H1 (cell line): ENCODE measurements at regions of chr9 and their contacts with region 1.

Region 1: GRCh38 chr9:124297553-124297905 is 39.8 kb downstream of the NEK6 start:
- DNase-seq: peak; percentile 62
- H3K4me3 ChIP-seq: no peak overlapping the region
- H3K27ac ChIP-seq: 0 out of 2 replicates have a peak overlapping the region, but pooled peaks have one; percentile 17
- H3K4me1 ChIP-seq: peaks cover 0 to 24% (median 12%) of the 10 kb centered on the region in 4 experiments; a peak in 5 of 7 replicates
- H3K27me3 ChIP-seq: no peaks in the 10 kb centered on the region
- CTCF ChIP-seq: no peak
- EP300 ChIP-seq: no peak
- POLR2A ChIP-seq: no peak
- RAD21 ChIP-seq: no peak

Region 2: DNA sequence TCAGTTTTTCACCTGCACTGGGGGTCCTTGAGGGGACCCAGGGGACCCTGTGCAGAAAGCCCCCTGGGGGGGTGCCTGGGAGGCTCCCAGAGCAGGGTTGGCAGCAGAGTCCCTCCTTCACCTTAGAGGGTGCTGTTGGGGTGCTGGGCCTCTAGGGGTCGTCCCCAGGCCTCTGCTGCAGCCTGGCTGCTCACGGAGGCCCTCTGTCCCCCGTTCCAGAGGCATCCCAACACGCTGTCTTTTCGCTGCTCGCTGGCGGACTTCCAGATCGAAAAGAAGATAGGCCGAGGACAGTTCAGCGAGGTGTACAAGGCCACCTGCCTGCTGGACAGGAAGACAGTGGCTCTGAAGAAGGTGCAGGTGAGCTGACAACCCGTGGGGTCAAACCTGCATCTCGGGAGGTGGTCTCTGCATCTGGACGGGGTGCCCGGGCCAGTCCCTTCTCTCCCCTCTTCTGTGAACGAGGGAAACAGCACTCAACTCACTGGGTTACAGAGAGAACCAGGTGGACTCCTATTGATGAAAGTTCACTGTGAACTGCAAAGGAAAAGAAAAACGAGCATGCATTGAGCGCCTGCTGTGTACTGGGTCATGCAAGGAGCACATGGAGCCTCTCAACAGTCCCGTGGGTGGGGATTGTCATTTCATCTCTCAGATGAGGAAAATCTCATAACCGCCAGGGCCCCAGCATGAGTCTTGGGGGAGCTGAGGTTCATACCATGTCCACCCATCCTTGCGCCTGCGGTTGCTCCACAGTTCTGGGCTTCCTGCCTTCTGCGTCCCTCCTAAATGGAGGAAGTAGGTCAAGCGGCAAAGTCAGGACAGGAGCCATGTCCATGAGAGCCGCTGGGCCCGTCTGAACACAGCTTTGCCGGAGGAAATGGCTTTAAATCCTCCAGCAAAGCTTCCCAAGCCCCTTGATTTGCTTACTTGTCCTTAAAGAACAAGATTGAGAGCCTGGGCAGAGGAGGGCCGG is 15.0 kb after region 1 on chr9:
- CTCF ChIA-PET with region 1: interaction called, 23 read pairs
- POLR2A ChIA-PET with region 1: interaction called, 3 read pairs
- DNase-seq: no peak
- H3K4me3 ChIP-seq: no peak overlapping the region
- H3K27ac ChIP-seq: no peak overlapping the region
- H3K4me1 ChIP-seq: peaks cover 0 to 9% (median 3%) of the 10 kb centered on the region in 4 experiments; a peak in 3 of 7 replicates
- H3K27me3 ChIP-seq: no peaks in the 10 kb centered on the region
- CTCF ChIP-seq: peak; percentile 67 to 82 (median 67)
- EP300 ChIP-seq: no peak
- POLR2A ChIP-seq: no peak
- RAD21 ChIP-seq: peak; percentile 42 to 64

Region 3: GRCh38 chr9:124320062-124320973 is 22.8 kb after region 1 on chr9:
- CTCF ChIA-PET with region 1: interaction called, 10 read pairs
- POLR2A ChIA-PET with region 1: no interaction called
- DNase-seq: peak; percentile 47 to 93
- H3K4me3 ChIP-seq: no peak overlapping the region
- H3K27ac ChIP-seq: no peak overlapping the region
- H3K4me1 ChIP-seq: peaks cover 0 to 1% (median 0%) of the 10 kb centered on the region in 4 experiments; a peak in 1 of 7 replicates
- H3K27me3 ChIP-seq: no peaks in the 10 kb centered on the region
- CTCF ChIP-seq: peak in 2 of 3 experiments; percentile 81 to 96; a peak in 3 of 4 replicates
- EP300 ChIP-seq: no peak
- POLR2A ChIP-seq: no peak
- RAD21 ChIP-seq: peak; percentile 62 to 74

Region 4: DNA sequence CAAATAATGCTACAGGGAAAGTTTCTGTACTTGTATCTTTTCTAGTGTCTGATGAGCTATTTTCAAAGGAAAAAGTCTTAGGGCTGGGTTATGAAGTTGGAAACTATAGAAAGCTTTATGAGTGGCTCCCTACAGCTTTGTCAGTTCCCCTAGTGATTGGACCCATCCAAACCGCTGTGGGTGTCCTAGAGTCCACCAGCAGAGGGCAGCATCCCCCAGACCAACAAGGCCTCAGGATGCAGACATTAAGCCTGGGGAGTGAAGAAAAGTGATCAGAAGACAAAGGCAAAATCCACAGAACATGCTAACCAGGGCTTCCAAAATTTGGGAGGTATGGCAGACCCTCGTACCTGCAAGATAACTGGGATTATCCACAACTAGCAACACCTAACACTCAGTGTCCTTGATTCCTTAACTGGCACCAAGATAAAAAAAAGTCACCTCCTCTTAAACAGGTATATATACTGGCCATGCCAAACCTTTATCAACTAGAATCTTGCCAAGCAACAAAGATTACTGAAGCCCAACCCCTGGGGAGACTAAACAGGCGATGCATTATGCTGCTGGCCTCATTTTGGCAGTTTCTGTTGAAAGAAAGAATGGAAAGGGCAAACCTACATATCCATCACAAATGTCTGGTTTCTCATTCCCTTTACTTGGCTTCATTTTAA is 320.1 kb after region 1 on chr9:
- CTCF ChIA-PET with region 1: no interaction called
- POLR2A ChIA-PET with region 1: no interaction called
- DNase-seq: peak; percentile 58 to 93
- H3K4me3 ChIP-seq: peak overlapping the region in 1 of 4 experiments; percentile 16; a peak in 1 of 8 replicates
- H3K27ac ChIP-seq: peak overlapping the region; percentile 30
- H3K4me1 ChIP-seq: peaks cover 0 to 21% (median 10%) of the 10 kb centered on the region in 4 experiments; a peak in 4 of 7 replicates
- H3K27me3 ChIP-seq: no peaks in the 10 kb centered on the region
- CTCF ChIP-seq: peak; percentile 89 to 94 (median 89)
- EP300 ChIP-seq: no peak
- POLR2A ChIP-seq: no peak
- RAD21 ChIP-seq: peak; percentile 92 to 97